HAP-1 (cell line): ENCODE measurements at regions of chr1 and their contacts with region 1.

Region 1: GRCh38 chr1:48916130-48917069 is 139.7 kb upstream of the BEND5 start:
- DNase-seq: peak; percentile 10 to 15
- H3K4me3 ChIP-seq: no peak overlapping the region
- H3K4me1 ChIP-seq: no peaks in the 10 kb centered on the region
- H3K27me3 ChIP-seq: no peaks in the 10 kb centered on the region

Region 2: GRCh38 chr1:50332941-50333594 is 1416.7 kb after region 1 on chr1:
- in situ Hi-C with region 1: loop called (anchors 25 kb)
- DNase-seq: peak; percentile 50 to 85
- H3K4me3 ChIP-seq: peak overlapping the region; percentile 40
- H3K4me1 ChIP-seq: peaks cover 2% of the 10 kb centered on the region
- H3K27me3 ChIP-seq: peaks cover 18% of the 10 kb centered on the region; the same call in 1 of the 2 replicates